Mammary epithelial cell (primary cell): ENCODE measurements at regions of chr11 and their contacts with region 1.

Region 1: GRCh38 chr11:16820324-16821092 is 82.1 kb downstream of the C11orf58 start:
- DNase-seq: peak; percentile 75
- H3K4me3 ChIP-seq: no peak overlapping the region
- H3K27ac ChIP-seq: no peak overlapping the region
- H3K4me1 ChIP-seq: peaks cover 15% of the 10 kb centered on the region
- H3K27me3 ChIP-seq: no peaks in the 10 kb centered on the region
- CTCF ChIP-seq: peak; percentile 76 to 91

Region 2: GRCh38 chr11:16759857-16760256 is 60.7 kb before region 1 on chr11:
- CTCF ChIA-PET with region 1: no interaction called
- dilution Hi-C with region 1: no loop called
- in situ Hi-C with region 1: no loop called
- intact Hi-C with region 1: no loop called
- DNase-seq: no peak
- H3K4me3 ChIP-seq: no peak overlapping the region
- H3K27ac ChIP-seq: no peak overlapping the region
- H3K4me1 ChIP-seq: no peaks in the 10 kb centered on the region
- H3K27me3 ChIP-seq: no peaks in the 10 kb centered on the region
- CTCF ChIP-seq: no peak

Region 3: GRCh38 chr11:16867097-16867496 is 46.6 kb after region 1 on chr11:
- CTCF ChIA-PET with region 1: no interaction called
- dilution Hi-C with region 1: no loop called
- in situ Hi-C with region 1: no loop called
- intact Hi-C with region 1: no loop called
- DNase-seq: peak; percentile 69
- H3K4me3 ChIP-seq: no peak overlapping the region
- H3K27ac ChIP-seq: no peak overlapping the region
- H3K4me1 ChIP-seq: peaks cover 19% of the 10 kb centered on the region
- H3K27me3 ChIP-seq: no peaks in the 10 kb centered on the region
- CTCF ChIP-seq: no peak

Region 4: GRCh38 chr11:16881074-16881709 is 60.7 kb after region 1 on chr11:
- CTCF ChIA-PET with region 1: interaction called, 5 read pairs
- dilution Hi-C with region 1: no loop called
- in situ Hi-C with region 1: no loop called
- intact Hi-C with region 1: loop called (anchors 1 kb)
- DNase-seq: peak; percentile 89
- H3K4me3 ChIP-seq: no peak overlapping the region
- H3K27ac ChIP-seq: peak overlapping the region; percentile 58
- H3K4me1 ChIP-seq: peaks cover 60% of the 10 kb centered on the region
- H3K27me3 ChIP-seq: no peaks in the 10 kb centered on the region
- CTCF ChIP-seq: peak; percentile 38 to 68

Region 5: GRCh38 chr11:16924826-16925560 is 104.5 kb after region 1 on chr11:
- CTCF ChIA-PET with region 1: interaction called, 7 read pairs
- dilution Hi-C with region 1: no loop called
- in situ Hi-C with region 1: loop called in 1 of 2 experiments (anchors 5 kb)
- intact Hi-C with region 1: loop called (anchors 1 kb)
- DNase-seq: peak; percentile 84
- H3K4me3 ChIP-seq: peak overlapping the region; percentile 65 to 82 (median 72)
- H3K27ac ChIP-seq: peak overlapping the region; percentile 70
- H3K4me1 ChIP-seq: peaks cover 31% of the 10 kb centered on the region
- H3K27me3 ChIP-seq: no peaks in the 10 kb centered on the region
- CTCF ChIP-seq: no peak

Region 6: DNA sequence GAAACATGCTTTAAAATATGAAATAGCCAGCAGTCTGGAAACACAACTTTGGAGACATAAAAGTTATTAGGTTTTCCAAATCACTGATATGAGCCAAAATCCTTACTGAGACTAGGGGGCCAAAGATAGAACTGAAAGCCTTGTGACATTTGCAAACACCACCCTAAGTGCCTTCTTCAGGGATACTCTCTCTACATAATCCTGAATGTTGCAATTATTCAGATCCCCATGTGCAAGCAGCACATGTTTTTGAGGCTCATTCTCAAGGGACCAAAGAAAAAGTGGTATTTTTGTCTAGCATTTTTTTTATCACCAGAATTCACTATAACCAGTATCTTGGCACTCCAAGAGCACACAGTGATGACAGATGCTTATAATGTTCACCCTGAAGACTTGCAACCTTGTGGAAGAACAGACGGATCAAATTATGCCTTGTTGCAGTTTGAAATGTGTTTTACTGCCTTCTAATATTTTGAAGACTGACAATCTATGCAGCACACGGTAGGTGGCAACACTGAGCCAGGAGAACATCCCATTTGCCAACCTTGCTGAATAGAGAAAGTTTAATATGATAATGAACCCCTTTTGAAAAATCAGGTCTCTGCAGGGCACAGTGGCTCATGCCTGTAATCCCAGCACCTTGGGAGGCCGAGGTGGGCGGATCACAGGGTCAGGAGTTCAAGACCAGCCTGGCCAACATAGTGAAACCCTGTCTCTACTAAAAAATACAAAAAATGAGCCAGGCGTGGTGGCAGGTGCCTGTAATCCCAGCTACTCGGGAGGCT is 115.2 kb after region 1 on chr11:
- CTCF ChIA-PET with region 1: no interaction called
- dilution Hi-C with region 1: no loop called
- in situ Hi-C with region 1: loop called in 1 of 2 experiments (anchors 5 kb)
- intact Hi-C with region 1: loop called (anchors 1 kb)
- DNase-seq: peak; percentile 45
- H3K4me3 ChIP-seq: no peak overlapping the region
- H3K27ac ChIP-seq: no peak overlapping the region
- H3K4me1 ChIP-seq: no peaks in the 10 kb centered on the region
- H3K27me3 ChIP-seq: no peaks in the 10 kb centered on the region
- CTCF ChIP-seq: peak; percentile 80 to 85